ENCODE measurements at regions of chrX and their contacts with region 1.

Region 1: DNA sequence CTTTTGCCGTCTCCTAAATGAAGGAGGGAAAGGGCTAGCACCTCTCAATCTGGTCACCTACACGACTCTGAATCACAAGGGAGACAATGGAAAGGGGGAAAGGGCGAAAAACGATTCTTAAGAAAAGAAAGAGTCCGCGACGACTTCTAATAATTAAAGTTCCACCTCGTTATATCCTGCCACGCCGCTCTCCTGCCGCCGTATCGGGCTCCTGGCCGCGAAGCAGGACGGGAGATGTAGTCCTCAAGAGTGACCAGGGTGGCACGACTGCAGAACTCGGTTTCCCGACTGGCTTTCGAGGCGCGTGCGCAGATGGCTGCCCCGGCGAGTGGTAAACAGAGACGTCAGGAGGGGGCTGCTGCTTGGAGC is at the start of gene FOXO4:
- DNase-seq: peak; percentile 79 to 83 (median 79)
- H3K4me3 ChIP-seq: peak within 1 kb of the TSS; percentile 83 to 90 (median 85)
- H3K4me3 Mint-ChIP-seq: peak within 1 kb of the TSS; percentile 92 to 98
- H3K27ac ChIP-seq: peak within 1 kb of the TSS; percentile 6 to 75
- H3K27ac Mint-ChIP-seq: peak within 1 kb of the TSS; percentile 80 to 94 (median 91)
- H3K4me1 ChIP-seq: peaks cover 23 to 29% of the 10 kb centered on the region in 2 donors
- H3K4me1 Mint-ChIP-seq: peaks cover 20% of the 10 kb centered on the region
- H3K27me3 ChIP-seq: no peaks in the 10 kb centered on the region
- H3K27me3 Mint-ChIP-seq: peaks cover 0 to 20% (median 5%) of the 10 kb centered on the region in 3 donors
- CTCF ChIP-seq: no peak
- polyA plus RNA-seq, gene FOXO4: 1.4 to 9.2 (median 1.5) TPM

Region 2: GRCh38 chrX:71128915-71129765 is 33.6 kb after region 1 on chrX:
- intact Hi-C with region 1: loop called in 1 of 2 experiments (anchors 1 kb)
- DNase-seq: peak; percentile 58 to 66 (median 60)
- H3K4me3 ChIP-seq: no peak overlapping the region
- H3K4me3 Mint-ChIP-seq: no peak overlapping the region
- H3K27ac ChIP-seq: peak overlapping the region in 1 of 2 donors; percentile 0
- H3K27ac Mint-ChIP-seq: peak overlapping the region in 4 of 7 donors; percentile 18 to 80 (median 72)
- H3K4me1 ChIP-seq: no peaks in the 10 kb centered on the region
- H3K4me1 Mint-ChIP-seq: peaks cover 6% of the 10 kb centered on the region
- H3K27me3 ChIP-seq: no peaks in the 10 kb centered on the region
- H3K27me3 Mint-ChIP-seq: peaks cover 0 to 1% (median 0%) of the 10 kb centered on the region in 3 donors
- CTCF ChIP-seq: peak; percentile 74

Measured in CD14-positive monocyte (primary cell).